ENCODE measurements at regions of chr12 and their contacts with region 1.

Region 1: GRCh38 chr12:34022079-34022830 is at the start of gene ALG10:
- DNase-seq: peak; percentile 97 to 98
- H3K4me3 ChIP-seq: peak within 1 kb of the TSS; percentile 65 to 85 (median 71)
- H3K27ac ChIP-seq: peak within 1 kb of the TSS; percentile 89 to 91
- H3K4me1 ChIP-seq: no peaks in the 10 kb centered on the region
- H3K27me3 ChIP-seq: no peaks in the 10 kb centered on the region
- CTCF ChIP-seq: peak; percentile 17 to 73 (median 69)
- POLR2A ChIP-seq: no peak
- total RNA-seq, gene ALG10: 7.5 to 12.4 (median 7.7) TPM

Region 2: GRCh38 chr12:32755654-32756475 is 1266.4 kb before region 1 on chr12 and contains the start of gene YARS2:
- intact Hi-C with region 1: loop called (anchors 10 kb)
- DNase-seq: peak; percentile 89 to 94
- H3K4me3 ChIP-seq: peak within 1 kb of the TSS; percentile 82 to 98 (median 97)
- H3K27ac ChIP-seq: peak within 1 kb of the TSS; percentile 91 to 94
- H3K4me1 ChIP-seq: peaks cover 3 to 5% of the 10 kb centered on the region in 2 donors
- H3K27me3 ChIP-seq: no peaks in the 10 kb centered on the region
- CTCF ChIP-seq: peak; percentile 57 to 89 (median 84)
- POLR2A ChIP-seq: peak; percentile 58
- total RNA-seq, gene YARS2: 23.0 to 27.4 (median 23.9) TPM

Measured in breast epithelium (tissue), 4 donors.